GM10248 (cell line): ENCODE measurements at regions of chr1 and their contacts with region 1.

Region 1: GRCh38 chr1:234955107-234955731 is 173.4 kb downstream of the TOMM20 start:
- DNase-seq: no peak
- CTCF ChIP-seq: no peak

Region 2: DNA sequence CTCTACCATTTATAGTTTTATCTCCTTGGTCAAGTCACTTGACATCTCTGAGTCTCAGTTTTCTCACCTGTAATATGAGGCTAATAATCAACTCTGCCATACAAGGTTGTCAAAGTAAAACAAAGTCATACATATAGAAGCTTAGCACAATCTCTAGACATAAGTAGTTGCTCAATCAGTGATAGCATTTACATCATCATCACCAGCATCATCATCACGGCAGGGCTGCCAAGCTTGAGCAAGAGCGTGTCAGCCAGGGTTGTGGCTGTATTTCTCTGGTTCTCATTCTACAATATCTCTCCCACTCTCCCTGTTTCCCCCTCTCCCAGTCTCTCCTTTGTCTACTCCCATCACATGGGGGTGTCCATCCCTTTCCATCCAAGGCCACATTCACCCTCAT is 623.7 kb before region 1 on chr1:
- CTCF ChIA-PET with region 1: no interaction called
- POLR2A ChIA-PET with region 1: no interaction called
- DNase-seq: no peak
- CTCF ChIP-seq: no peak

Region 3: DNA sequence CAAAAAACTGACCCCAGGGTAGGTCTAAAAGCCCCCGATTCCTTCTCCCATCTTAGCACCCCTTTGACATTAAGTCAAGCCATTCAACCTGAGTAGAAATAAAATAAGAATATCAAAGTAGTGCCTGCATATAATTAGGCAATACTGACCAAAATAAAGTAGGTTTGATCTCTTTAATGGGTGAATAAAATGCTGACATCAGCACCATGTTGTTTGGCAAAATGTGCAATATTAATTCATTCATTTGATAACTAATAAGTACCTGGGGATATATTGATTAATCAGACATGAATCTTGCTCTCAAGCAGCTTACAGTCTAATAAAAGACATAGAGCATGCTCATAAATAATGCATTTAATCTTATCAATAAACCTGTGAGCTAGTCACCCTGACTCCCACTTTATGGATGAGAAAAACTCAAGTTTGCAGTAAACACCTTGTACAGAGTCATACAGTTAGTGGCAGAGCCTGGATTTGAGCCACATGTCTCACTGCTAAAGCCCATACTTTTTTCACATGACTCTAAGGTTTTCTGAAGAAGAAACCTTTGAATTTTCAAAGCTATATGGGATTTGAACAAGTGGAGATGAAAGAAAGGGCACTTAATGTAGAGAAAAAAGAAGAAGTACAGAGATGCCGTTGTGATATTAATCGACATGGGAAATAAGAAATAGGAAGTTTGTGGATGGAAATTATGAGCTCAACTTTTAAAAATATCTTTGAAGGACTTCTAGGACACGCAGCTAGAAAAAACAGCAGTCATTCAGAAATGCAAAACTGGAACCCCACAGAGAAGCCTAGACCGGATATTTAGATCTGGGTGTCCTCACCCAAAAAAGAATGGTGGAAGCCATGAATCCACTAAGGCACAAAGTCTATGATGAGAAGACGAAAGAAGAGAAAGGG is 10.5 kb before region 1 on chr1:
- CTCF ChIA-PET with region 1: interaction called, 11 read pairs
- POLR2A ChIA-PET with region 1: interaction called, 9 read pairs
- DNase-seq: peak; percentile 47
- CTCF ChIP-seq: no peak

Region 4: DNA sequence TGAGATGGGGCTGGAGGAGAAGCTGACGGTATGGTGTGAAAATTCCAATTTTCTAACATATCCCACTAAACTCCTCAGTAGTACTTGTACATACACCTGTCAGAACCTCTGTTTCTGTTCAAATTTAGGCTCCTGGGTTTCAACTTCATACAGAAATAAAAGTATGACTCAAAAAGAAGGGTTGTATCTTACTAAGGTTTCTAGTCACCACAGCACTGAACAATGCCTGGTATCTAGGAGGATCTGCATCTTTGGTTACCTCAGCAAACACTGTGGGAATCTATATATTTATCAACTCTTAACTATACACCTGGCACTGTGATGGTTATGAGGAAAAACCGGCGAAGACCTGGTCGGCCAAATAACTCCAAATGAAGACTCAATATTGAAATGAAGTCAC is 192.1 kb after region 1 on chr1:
- CTCF ChIA-PET with region 1: no interaction called
- POLR2A ChIA-PET with region 1: no interaction called
- DNase-seq: no peak
- CTCF ChIP-seq: no peak